GM12878 (cell line): ENCODE measurements at regions of chr2 and their contacts with region 1.

Region 1: DNA sequence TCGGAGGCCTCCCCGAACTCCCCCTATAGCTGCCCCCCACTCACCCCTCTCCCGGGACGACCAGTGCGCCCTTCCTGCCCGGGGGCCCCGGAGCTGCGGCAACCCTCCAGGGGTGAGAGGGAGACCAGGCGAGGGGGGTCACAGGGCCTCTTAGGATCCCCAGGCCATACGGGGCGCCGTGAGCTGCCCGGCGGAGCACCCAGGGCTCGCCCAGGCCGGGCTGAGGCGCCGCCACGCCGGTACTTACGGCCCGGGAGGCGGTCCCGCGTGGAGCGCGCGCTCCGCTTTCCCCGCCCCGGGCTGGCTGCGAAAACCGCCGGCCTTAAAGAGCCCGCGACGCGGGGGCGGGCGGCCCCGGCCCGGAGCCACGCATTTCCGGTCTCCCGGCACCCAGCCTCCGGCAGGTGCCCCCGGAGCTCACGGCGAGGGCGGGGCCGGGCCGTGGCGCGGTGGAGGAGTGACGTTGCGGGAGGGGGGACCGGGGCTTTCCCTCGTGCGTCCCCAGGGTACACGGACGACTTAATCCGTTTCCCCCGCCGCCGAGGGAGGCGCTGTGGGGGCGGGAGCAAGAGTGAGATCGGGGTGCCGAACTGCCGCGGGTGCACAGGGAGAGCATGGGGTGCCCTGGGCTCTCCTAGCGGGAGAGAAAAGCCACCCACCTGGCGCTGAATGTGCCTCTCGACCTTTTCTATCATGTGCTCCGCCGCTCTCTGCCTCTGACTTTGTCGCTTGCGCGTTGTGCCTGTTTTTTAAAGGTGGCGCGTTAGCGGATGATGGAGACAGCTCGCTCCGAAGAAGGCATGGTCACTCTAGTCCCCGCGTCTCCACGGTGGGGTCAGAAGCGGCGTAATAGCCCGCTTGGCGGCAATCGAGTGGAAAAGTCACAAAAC is at the start of gene METTL21A:
- DNase-seq: peak; percentile 86
- ATAC-seq: peak; percentile 74
- H3K4me3 ChIP-seq: peak within 1 kb of the TSS; percentile 81
- H3K27ac ChIP-seq: peak within 1 kb of the TSS; percentile 96
- H3K4me1 ChIP-seq: peaks cover 22% of the 10 kb centered on the region
- H3K27me3 ChIP-seq: no peaks in the 10 kb centered on the region
- CTCF ChIP-seq: peak; percentile 50 to 74 (median 73)
- EP300 ChIP-seq: peak; percentile 51 to 58; a peak in 2 of 4 replicates
- POLR2A ChIP-seq: peak; percentile 89
- RAD21 ChIP-seq: peak; percentile 31; the same call in 1 of the 2 replicates
- polyA plus RNA-seq, gene METTL21A: 6.8 to 13.9 TPM

Region 2: GRCh38 chr2:207133820-207134519 is 491.3 kb before region 1 on chr2:
- CTCF ChIA-PET with region 1: no interaction called
- POLR2A ChIA-PET with region 1: no interaction called
- RAD21 ChIA-PET with region 1: no interaction called
- SMC1A ChIA-PET with region 1: no interaction called
- in situ Hi-C with region 1: no loop called
- intact Hi-C with region 1: no loop called
- DNase-seq: no peak
- ATAC-seq: no peak
- H3K4me3 ChIP-seq: no peak overlapping the region
- H3K27ac ChIP-seq: no peak overlapping the region
- H3K4me1 ChIP-seq: peaks cover 2% of the 10 kb centered on the region; the same call in 1 of the 2 replicates
- H3K27me3 ChIP-seq: no peaks in the 10 kb centered on the region
- CTCF ChIP-seq: no peak
- EP300 ChIP-seq: no peak
- POLR2A ChIP-seq: no peak
- RAD21 ChIP-seq: no peak

Region 3: GRCh38 chr2:207423886-207424285 is 201.4 kb before region 1 on chr2:
- CTCF ChIA-PET with region 1: no interaction called
- POLR2A ChIA-PET with region 1: no interaction called
- RAD21 ChIA-PET with region 1: no interaction called
- SMC1A ChIA-PET with region 1: no interaction called
- in situ Hi-C with region 1: no loop called
- intact Hi-C with region 1: no loop called
- DNase-seq: peak; percentile 74
- ATAC-seq: peak; percentile 99
- H3K4me3 ChIP-seq: no peak overlapping the region
- H3K27ac ChIP-seq: no peak overlapping the region
- H3K4me1 ChIP-seq: peaks cover 5% of the 10 kb centered on the region; the same call in 1 of the 2 replicates
- H3K27me3 ChIP-seq: no peaks in the 10 kb centered on the region
- CTCF ChIP-seq: no peak
- EP300 ChIP-seq: no peak
- POLR2A ChIP-seq: no peak
- RAD21 ChIP-seq: no peak

Region 4: GRCh38 chr2:207437524-207438143 is 187.6 kb before region 1 on chr2:
- CTCF ChIA-PET with region 1: no interaction called
- POLR2A ChIA-PET with region 1: no interaction called
- RAD21 ChIA-PET with region 1: no interaction called
- SMC1A ChIA-PET with region 1: no interaction called
- in situ Hi-C with region 1: no loop called
- intact Hi-C with region 1: no loop called
- DNase-seq: no peak
- ATAC-seq: no peak
- H3K4me3 ChIP-seq: no peak overlapping the region
- H3K27ac ChIP-seq: no peak overlapping the region
- H3K4me1 ChIP-seq: no peaks in the 10 kb centered on the region
- H3K27me3 ChIP-seq: no peaks in the 10 kb centered on the region
- CTCF ChIP-seq: no peak
- EP300 ChIP-seq: no peak
- POLR2A ChIP-seq: no peak
- RAD21 ChIP-seq: no peak

Region 5: DNA sequence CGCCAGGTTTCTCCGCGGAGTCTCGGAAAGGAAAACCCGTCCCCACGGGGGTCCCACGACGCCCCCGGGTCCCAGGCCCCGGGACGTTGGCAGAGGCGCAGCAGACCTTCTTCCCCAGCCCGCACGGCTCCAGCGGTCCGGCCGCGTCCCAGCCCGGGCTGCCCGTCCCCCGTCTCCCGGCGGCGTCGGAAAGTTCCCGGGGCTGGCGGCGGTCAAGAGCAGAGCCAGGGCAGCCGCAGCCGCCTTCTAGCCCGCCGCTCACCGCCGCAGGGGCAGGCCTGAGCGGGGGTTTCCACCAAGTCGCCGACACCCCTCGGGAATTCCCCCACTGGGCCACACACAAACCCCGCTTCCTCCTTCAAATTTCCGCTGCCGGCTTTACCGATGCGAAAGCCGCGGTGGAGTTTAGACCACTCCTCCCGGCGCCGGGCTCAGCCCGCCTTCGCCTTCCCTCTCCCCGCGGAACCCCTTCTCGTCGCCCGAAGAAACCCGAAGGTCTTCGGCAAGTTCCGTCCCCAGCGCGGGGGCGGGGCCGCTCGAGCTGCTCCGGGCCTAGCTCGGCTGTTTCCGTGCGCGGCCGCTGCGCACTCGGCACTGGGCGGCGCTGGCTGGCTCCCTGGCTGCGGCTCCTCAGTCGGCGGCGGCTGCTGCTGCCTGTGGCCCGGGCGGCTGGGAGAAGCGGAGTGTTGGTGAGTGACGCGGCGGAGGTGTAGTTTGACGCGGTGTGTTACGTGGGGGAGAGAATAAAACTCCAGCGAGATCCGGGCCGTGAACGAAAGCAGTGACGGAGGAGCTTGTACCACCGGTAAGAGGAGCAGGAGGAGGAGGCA is 95.7 kb before region 1 on chr2 and contains the start of gene CREB1:
- CTCF ChIA-PET with region 1: interaction called, 13 read pairs
- POLR2A ChIA-PET with region 1: interaction called, 30 read pairs
- RAD21 ChIA-PET with region 1: interaction called, 30 read pairs
- SMC1A ChIA-PET with region 1: interaction called, 16 read pairs
- in situ Hi-C with region 1: no loop called
- intact Hi-C with region 1: loop called (anchors 1 kb)
- DNase-seq: peak; percentile 93
- ATAC-seq: peak; percentile 87
- H3K4me3 ChIP-seq: peak within 1 kb of the TSS; percentile 97
- H3K27ac ChIP-seq: peak within 1 kb of the TSS; percentile 99
- H3K4me1 ChIP-seq: peaks cover 26% of the 10 kb centered on the region
- H3K27me3 ChIP-seq: no peaks in the 10 kb centered on the region
- CTCF ChIP-seq: no peak; a peak in 1 of 6 replicates
- EP300 ChIP-seq: peak; percentile 77 to 79; a peak in 2 of 4 replicates
- POLR2A ChIP-seq: peak; percentile 94
- RAD21 ChIP-seq: no peak
- polyA plus RNA-seq, gene CREB1: 13.4 to 22.2 TPM

Region 6: DNA sequence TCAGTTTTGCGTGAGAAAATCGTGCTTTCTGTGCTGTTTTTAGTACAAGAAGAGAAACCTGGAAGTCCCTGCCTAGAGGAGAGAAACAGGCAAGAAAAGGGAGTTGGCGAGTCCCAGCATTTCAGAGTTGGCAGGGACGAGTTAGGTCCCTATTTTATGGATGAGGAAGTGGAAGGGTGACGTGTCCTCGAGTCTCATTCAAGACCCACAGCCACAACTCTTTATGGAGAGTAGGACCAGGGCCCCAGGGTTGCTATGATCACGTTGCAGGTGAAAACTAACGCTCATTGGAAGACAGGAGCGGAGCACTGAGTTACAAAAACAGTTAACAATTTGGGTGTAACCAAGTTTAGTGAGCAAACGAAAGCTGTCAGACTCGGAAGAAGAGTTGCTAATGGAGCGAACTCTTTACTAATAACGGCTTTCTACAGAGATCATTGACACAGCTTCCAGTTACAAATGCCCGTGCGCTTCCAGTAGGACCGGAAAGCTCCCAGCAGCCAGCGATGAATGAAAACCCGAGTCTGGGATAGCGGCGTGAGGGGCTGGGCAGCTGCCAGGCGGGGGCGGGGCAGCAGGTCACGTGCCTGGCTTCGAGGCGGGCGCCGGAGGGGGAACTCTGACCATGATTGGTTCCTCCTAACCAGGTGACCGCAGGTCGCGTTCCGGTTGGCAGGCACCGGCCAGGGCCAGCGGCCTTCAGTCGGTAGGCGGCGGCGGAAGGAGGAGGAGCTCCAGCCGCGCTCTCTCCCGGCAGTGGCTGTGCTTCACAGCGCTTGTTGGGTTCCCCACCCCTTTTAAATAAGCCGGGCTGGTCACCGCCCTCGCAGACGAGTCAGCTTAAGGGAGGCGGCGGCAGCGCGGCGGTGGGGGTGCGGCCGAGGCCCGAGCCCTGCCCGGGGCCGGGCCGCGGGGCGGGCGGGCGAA is 85.8 kb after region 1 on chr2 and contains the start of gene CCNYL1:
- CTCF ChIA-PET with region 1: interaction called, 26 read pairs
- POLR2A ChIA-PET with region 1: interaction called, 14 read pairs
- RAD21 ChIA-PET with region 1: interaction called, 19 read pairs
- SMC1A ChIA-PET with region 1: interaction called, 7 read pairs
- in situ Hi-C with region 1: no loop called
- intact Hi-C with region 1: no loop called
- DNase-seq: peak; percentile 93
- ATAC-seq: peak; percentile 99
- H3K4me3 ChIP-seq: peak within 1 kb of the TSS; percentile 96
- H3K27ac ChIP-seq: peak within 1 kb of the TSS; percentile 75
- H3K4me1 ChIP-seq: no peaks in the 10 kb centered on the region
- H3K27me3 ChIP-seq: no peaks in the 10 kb centered on the region
- CTCF ChIP-seq: no peak
- EP300 ChIP-seq: no peak
- POLR2A ChIP-seq: peak; percentile 87
- RAD21 ChIP-seq: no peak
- polyA plus RNA-seq, gene CCNYL1: 2.4 to 3.7 TPM

Region 7: GRCh38 chr2:207734264-207734635 is 109.0 kb after region 1 on chr2:
- CTCF ChIA-PET with region 1: interaction called, 79 read pairs
- POLR2A ChIA-PET with region 1: interaction called, 32 read pairs
- RAD21 ChIA-PET with region 1: interaction called, 26 read pairs
- SMC1A ChIA-PET with region 1: interaction called, 52 read pairs
- in situ Hi-C with region 1: no loop called
- intact Hi-C with region 1: loop called (anchors 1 kb)
- DNase-seq: no peak
- ATAC-seq: peak; percentile 55
- H3K4me3 ChIP-seq: no peak overlapping the region
- H3K27ac ChIP-seq: no peak overlapping the region
- H3K4me1 ChIP-seq: no peaks in the 10 kb centered on the region
- H3K27me3 ChIP-seq: no peaks in the 10 kb centered on the region
- CTCF ChIP-seq: peak; percentile 42 to 58 (median 46); a peak in 4 of 6 replicates
- EP300 ChIP-seq: no peak
- POLR2A ChIP-seq: no peak
- RAD21 ChIP-seq: peak; percentile 58

Region 8: GRCh38 chr2:207974216-207974605 is 348.9 kb after region 1 on chr2:
- CTCF ChIA-PET with region 1: interaction called, 46 read pairs
- POLR2A ChIA-PET with region 1: no interaction called
- RAD21 ChIA-PET with region 1: interaction called, 10 read pairs
- SMC1A ChIA-PET with region 1: interaction called, 17 read pairs
- in situ Hi-C with region 1: no loop called
- intact Hi-C with region 1: loop called (anchors 5 kb)
- DNase-seq: no peak
- ATAC-seq: no peak
- H3K4me3 ChIP-seq: no peak overlapping the region
- H3K27ac ChIP-seq: no peak overlapping the region
- H3K4me1 ChIP-seq: 0 out of 2 replicates have a peak, but pooled peaks cover 3% of the 10 kb centered on the region
- H3K27me3 ChIP-seq: no peaks in the 10 kb centered on the region
- CTCF ChIP-seq: no peak
- EP300 ChIP-seq: no peak
- POLR2A ChIP-seq: no peak
- RAD21 ChIP-seq: no peak

Region 9: DNA sequence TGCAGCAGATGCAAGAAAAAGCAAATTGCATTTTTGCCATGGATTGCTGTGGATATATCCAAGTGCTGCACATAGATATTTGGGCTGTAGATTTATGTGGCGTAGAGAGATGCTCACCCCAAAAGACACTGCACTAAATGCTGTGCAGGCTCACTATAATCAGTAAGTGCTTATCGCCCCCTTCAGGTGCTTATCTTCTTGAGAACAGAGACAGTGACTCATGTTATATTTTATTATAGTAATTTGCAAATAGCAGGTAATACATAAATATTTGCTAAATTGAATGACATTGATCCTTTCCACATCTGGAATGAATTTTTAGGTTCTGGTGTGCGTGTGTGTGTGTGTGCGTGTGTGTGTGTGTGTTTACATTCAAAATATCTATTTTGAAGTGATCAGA is 436.9 kb after region 1 on chr2:
- CTCF ChIA-PET with region 1: interaction called, 14 read pairs
- POLR2A ChIA-PET with region 1: interaction called, 4 read pairs
- RAD21 ChIA-PET with region 1: interaction called, 5 read pairs
- SMC1A ChIA-PET with region 1: no interaction called
- in situ Hi-C with region 1: no loop called
- intact Hi-C with region 1: loop called (anchors 5 kb)
- DNase-seq: no peak
- ATAC-seq: peak; percentile 54
- H3K4me3 ChIP-seq: no peak overlapping the region
- H3K27ac ChIP-seq: no peak overlapping the region
- H3K4me1 ChIP-seq: peaks cover 4% of the 10 kb centered on the region
- H3K27me3 ChIP-seq: no peaks in the 10 kb centered on the region
- CTCF ChIP-seq: peak; percentile 30 to 41 (median 35); a peak in 5 of 6 replicates
- EP300 ChIP-seq: no peak
- POLR2A ChIP-seq: no peak
- RAD21 ChIP-seq: peak; percentile 54

Region 10: GRCh38 chr2:208315081-208315788 is 690.0 kb after region 1 on chr2:
- CTCF ChIA-PET with region 1: no interaction called
- POLR2A ChIA-PET with region 1: no interaction called
- RAD21 ChIA-PET with region 1: no interaction called
- SMC1A ChIA-PET with region 1: no interaction called
- in situ Hi-C with region 1: no loop called
- intact Hi-C with region 1: loop called (anchors 1 kb)
- DNase-seq: peak; percentile 73
- ATAC-seq: peak; percentile 56
- H3K4me3 ChIP-seq: peak overlapping the region; percentile 25; the same call in 1 of the 2 replicates
- H3K27ac ChIP-seq: peak overlapping the region; percentile 17
- H3K4me1 ChIP-seq: peaks cover 27% of the 10 kb centered on the region
- H3K27me3 ChIP-seq: no peaks in the 10 kb centered on the region
- CTCF ChIP-seq: peak; percentile 8 to 24 (median 24); a peak in 3 of 6 replicates
- EP300 ChIP-seq: peak; percentile 20 to 40; a peak in 2 of 4 replicates
- POLR2A ChIP-seq: no peak
- RAD21 ChIP-seq: 0 out of 2 replicates have a peak, but pooled peaks have one; percentile 17